ENCODE measurements at regions of chr2 and their contacts with region 1.

Region 1: GRCh38 chr2:205539601-205540000 is 142.7 kb upstream of the NRP2 start:
- DNase-seq: no peak
- ATAC-seq: no peak
- H3K4me3 ChIP-seq: no peak overlapping the region
- H3K27ac ChIP-seq: no peak overlapping the region
- H3K4me1 ChIP-seq: peaks cover 0 to 26% (median 2%) of the 10 kb centered on the region in 12 donors
- H3K27me3 ChIP-seq: no peaks in the 10 kb centered on the region
- CTCF ChIP-seq: peak in 1 of 12 donors; percentile 9
- POLR2A ChIP-seq: no peak

Region 2: DNA sequence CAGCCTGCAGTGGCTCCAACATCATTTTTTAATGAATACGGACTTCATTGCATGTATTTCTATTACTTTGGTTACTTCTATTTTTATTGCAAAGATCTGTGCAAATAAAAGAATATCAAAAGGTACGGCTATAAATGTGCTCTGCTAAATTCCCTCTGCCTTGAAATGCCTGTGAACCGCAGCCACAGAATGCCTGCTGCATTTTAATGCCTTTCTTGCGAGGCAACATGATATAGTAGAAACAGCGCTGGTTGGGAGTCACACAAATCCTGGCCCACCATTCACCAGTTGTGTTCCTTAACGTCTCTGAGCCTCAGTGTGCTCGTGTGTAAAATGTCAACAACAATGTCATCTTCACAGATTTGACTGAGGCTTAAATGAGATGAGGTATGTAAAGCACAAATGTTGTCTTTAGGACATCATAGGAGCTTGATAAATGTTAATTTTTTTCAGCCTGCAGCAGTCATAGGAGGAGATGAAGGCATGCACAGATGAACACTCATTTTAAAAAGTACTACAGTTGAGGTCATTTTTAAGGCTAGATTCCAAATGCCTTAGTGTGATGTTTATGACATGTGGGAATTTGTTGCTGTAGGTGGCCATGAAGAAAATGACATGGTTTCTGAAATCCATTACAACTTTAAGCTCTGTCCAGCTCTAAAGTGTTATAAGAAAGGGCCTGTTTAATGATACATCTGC is 44.9 kb before region 1 on chr2:
- intact Hi-C with region 1: loop called in 1 of 10 experiments (anchors 5 kb)
- DNase-seq: no peak
- ATAC-seq: no peak
- H3K4me3 ChIP-seq: no peak overlapping the region
- H3K27ac ChIP-seq: no peak overlapping the region
- H3K4me1 ChIP-seq: peaks cover 0 to 10% (median 0%) of the 10 kb centered on the region in 12 donors
- H3K27me3 ChIP-seq: no peaks in the 10 kb centered on the region
- CTCF ChIP-seq: no peak
- POLR2A ChIP-seq: no peak

Region 3: DNA sequence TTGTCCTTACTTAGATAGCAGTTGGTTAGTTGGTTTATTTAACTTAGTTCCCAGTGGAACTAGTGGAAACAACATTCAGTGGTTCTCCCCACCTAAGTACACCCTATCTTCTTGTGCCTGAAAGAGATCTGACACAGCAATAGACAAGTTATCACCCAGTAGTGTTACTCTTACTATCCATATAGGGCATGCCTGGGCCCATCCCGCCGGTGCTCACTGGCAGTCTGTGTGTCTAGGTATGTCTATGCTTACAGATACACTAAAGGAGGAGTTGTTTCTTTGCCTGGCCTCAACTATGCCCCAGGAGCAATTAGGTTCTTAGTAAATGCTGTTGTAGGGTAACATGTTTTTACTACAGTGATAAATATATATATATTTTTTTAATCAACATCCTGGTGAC is 130.7 kb after region 1 on chr2:
- intact Hi-C with region 1: loop called in 2 of 10 experiments (anchors 5 to 10 kb)
- DNase-seq: no peak
- ATAC-seq: no peak
- H3K4me3 ChIP-seq: no peak overlapping the region
- H3K27ac ChIP-seq: no peak overlapping the region
- H3K4me1 ChIP-seq: peaks cover 0 to 2% (median 0%) of the 10 kb centered on the region in 12 donors
- H3K27me3 ChIP-seq: no peaks in the 10 kb centered on the region
- CTCF ChIP-seq: no peak
- POLR2A ChIP-seq: no peak

Measured in heart left ventricle (tissue), 16 donors.